ENCODE measurements at regions of chr4 and their contacts with region 1.

Region 1: DNA sequence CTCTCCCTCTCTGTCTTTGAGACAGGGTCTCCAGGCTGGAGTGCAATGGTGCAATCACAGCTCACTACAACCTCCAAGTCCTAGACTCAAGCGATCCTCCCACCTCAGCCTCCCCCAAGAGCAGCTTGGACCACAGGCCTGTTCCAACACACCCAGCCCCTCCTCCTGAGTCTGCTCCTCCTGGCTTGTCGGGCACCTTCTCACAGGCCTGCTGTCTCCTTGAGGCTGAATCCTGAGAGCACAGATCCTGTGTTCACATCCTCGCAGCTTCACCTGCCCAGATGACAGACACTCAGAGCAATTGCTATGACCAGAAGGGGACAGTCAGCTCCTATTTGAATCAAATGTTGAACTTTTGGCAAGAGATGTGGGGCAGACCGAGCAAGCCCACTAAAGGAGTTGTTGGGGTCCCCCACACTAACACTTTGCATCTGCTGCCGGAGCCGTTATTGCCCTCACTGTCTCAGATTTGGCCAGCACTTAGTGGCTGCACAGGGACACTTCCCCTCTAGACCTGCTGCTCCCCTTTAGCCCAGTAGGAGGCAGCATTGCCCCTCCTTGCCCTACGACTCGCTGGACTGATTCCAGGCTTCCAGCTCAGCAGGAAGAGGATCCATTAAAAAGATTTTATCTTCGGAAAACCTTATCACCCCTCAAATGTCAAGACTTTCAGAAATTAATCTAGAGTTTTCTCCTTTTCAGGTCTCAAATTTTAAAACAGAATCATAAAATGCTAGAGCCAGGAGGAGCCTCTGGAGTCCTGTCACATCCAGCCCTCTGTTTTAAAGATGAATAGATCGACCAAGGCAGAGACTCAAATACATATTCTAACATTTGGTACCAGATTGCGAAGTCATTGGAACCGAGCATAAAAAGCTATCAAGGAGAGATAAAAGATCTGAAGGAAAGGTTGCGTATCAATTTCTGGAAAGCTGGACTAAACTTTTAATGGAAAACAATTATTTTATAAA is 113.7 kb downstream of the USP46 start:
- DNase-seq: peak in 1 of 2 donors; percentile 83
- H3K4me3 ChIP-seq: no peak overlapping the region
- H3K27ac ChIP-seq: no peak overlapping the region
- H3K4me1 ChIP-seq: no peaks in the 10 kb centered on the region
- H3K27me3 ChIP-seq: no peaks in the 10 kb centered on the region
- CTCF ChIP-seq: peak; percentile 85 to 92 (median 88)

Region 2: DNA sequence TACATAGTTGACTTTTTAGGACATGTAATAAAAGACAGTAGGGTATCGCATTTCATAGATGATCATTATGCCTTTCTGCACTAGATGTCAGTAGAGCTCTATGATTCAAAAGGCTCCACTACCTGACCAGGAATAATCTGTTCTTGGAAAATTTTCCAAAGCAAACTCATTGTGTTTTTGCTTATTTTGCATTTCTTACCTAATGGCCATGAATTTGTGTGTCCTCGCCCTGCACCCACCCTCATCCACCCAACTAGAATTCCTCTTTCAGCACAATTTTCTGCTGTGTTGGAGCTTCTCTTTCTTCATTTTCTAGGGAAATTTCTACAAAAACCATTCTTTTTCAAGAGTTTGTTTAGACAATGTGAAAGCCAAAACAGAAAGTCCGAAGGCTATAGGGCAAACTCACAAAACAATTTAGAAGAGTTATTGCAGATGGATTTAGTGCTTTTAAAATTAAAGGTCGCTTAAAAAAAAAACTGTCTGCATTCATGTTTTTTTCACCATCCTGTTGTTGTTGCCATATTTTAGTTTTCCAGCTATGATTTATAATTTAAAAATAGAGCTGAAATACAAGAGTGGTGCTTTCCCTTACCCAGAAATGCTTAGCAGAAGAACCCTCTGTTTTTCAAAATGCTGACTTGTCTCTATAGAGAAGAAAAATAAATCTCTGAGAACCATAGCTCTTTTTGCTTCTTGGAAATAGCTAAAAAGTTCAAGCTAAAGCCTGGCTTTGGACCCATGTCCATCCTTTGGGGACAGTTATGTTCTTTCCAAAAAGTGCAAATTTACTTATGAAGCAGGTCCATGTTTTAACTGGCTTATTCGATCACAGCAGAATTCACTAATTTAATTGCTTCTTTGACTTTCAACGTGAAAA is 310.6 kb before region 1 on chr4:
- intact Hi-C with region 1: loop called (anchors 5 kb)
- DNase-seq: no peak
- H3K4me3 ChIP-seq: peak overlapping the region; percentile 31 to 37
- H3K27ac ChIP-seq: no peak overlapping the region
- H3K4me1 ChIP-seq: peaks cover 0 to 5% of the 10 kb centered on the region in 2 donors
- H3K27me3 ChIP-seq: no peaks in the 10 kb centered on the region
- CTCF ChIP-seq: peak; percentile 43 to 71 (median 50)

Region 3: GRCh38 chr4:52376132-52376704 is 169.2 kb before region 1 on chr4:
- intact Hi-C with region 1: loop called (anchors 5 kb)
- DNase-seq: no peak
- H3K4me3 ChIP-seq: no peak overlapping the region
- H3K27ac ChIP-seq: no peak overlapping the region
- H3K4me1 ChIP-seq: no peaks in the 10 kb centered on the region
- H3K27me3 ChIP-seq: no peaks in the 10 kb centered on the region
- CTCF ChIP-seq: peak; percentile 37 to 70 (median 54)

Region 4: DNA sequence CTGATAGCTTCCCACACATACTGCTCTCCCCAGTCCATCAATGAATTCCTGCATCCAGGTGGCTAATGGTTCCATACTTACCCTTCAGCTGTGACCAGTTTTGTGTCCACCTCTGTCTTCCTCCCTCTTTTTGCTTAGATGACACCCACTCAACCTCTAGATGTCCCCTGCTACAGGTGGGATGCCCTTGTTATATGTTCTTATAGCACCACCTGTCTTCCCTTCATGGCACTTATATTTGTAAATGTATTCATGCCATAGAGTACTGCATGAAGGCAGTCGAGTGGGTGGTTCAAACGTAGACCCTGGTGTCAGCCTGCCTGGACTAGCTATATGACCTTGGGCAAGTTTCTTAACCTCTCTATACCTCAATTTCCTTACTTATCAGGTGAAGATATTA is 120.2 kb after region 1 on chr4:
- intact Hi-C with region 1: loop called (anchors 2 kb)
- DNase-seq: no peak
- H3K4me3 ChIP-seq: no peak overlapping the region
- H3K27ac ChIP-seq: no peak overlapping the region
- H3K4me1 ChIP-seq: no peaks in the 10 kb centered on the region
- H3K27me3 ChIP-seq: no peaks in the 10 kb centered on the region
- CTCF ChIP-seq: peak in 1 of 3 experiments; percentile 33

Region 5: DNA sequence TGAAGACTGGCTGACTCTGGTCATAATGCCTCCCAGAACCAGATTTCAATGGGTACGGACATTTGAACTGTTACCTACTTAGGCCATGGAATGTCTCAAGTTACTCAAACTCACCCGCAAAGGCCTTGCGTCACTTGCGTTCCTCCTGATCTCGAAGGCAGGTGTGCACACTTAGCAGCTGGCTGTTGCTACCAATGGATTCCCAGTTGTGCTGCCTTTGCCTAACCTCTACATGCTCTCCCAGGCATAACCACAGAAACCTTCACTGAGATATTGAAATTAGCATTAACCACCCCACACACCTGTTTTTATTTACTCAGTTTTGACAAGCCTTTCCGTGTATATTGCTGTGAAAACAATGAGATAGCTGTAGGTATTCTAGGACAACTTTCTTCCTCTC is 203.0 kb after region 1 on chr4:
- intact Hi-C with region 1: loop called (anchors 10 kb)
- DNase-seq: no peak
- H3K4me3 ChIP-seq: no peak overlapping the region
- H3K27ac ChIP-seq: no peak overlapping the region
- H3K4me1 ChIP-seq: peaks cover 0 to 6% of the 10 kb centered on the region in 2 donors
- H3K27me3 ChIP-seq: no peaks in the 10 kb centered on the region
- CTCF ChIP-seq: no peak

Region 6: DNA sequence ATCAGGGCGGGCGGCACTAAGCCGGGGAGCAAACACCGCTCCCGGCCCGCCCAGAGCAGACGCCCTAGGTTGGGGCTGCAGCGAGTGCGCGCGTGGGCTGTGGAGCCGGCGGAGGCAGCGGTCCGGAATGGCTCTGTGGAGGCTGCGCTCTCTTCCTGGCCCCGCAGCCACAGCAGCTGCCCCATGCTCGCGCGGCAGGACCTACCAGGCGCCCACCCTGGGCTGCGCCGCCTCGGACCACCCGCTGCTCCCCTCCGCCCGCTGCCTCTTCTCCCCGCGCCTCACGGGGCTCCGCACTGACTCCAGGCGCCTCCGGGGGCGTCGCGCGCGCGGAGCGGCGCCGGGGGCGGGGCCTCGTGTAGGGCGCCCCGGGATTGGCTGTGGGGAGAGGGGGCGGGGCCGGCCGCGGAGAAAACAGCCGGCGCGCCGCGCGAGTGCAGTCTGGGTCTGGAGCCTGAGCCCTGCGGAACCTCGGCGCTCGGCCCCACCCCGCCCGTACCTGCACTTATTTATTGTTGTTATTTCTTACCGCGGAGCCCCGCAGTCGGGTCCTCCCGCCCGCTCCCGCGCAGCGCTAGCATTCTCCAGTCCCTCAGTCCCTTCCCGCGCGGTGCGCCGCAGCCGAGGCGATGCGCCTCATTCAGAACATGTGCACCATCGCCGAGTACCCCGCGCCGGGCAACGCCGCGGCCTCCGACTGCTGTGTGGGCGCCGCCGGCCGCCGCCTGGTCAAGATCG is 316.7 kb after region 1 on chr4 and contains the start of gene RASL11B:
- intact Hi-C with region 1: loop called (anchors 5 kb)
- DNase-seq: peak; percentile 20 to 90
- H3K4me3 ChIP-seq: peak within 1 kb of the TSS; percentile 72 to 80
- H3K27ac ChIP-seq: peak within 1 kb of the TSS; percentile 68 to 79
- H3K4me1 ChIP-seq: peaks cover 0 to 17% of the 10 kb centered on the region in 2 donors
- H3K27me3 ChIP-seq: no peaks in the 10 kb centered on the region
- CTCF ChIP-seq: peak in 2 of 3 experiments; percentile 24 to 43
- total RNA-seq, gene RASL11B: not detected

Region 7: GRCh38 chr4:52983563-52984303 is 438.3 kb after region 1 on chr4:
- intact Hi-C with region 1: loop called (anchors 2 kb)
- DNase-seq: no peak
- H3K4me3 ChIP-seq: no peak overlapping the region
- H3K27ac ChIP-seq: peak overlapping the region in 1 of 2 donors; percentile 59
- H3K4me1 ChIP-seq: peaks cover 0 to 6% of the 10 kb centered on the region in 2 donors
- H3K27me3 ChIP-seq: no peaks in the 10 kb centered on the region
- CTCF ChIP-seq: peak; percentile 46 to 72 (median 55)

Measured in ascending aorta (tissue), 2 donors.